ENCODE measurements at regions of chr11 and their contacts with region 1.

Region 1: GRCh38 chr11:65497141-65498041 is 1.5 kb upstream of the MALAT1 start:
- DNase-seq: peak; percentile 99
- ATAC-seq: peak; percentile 77
- H3K4me3 Mint-ChIP-seq: no peak overlapping the region
- H3K27ac Mint-ChIP-seq: no peak overlapping the region
- H3K4me1 Mint-ChIP-seq: peaks cover 33% of the 10 kb centered on the region
- H3K27me3 Mint-ChIP-seq: no peaks in the 10 kb centered on the region
- CTCF ChIP-seq: no peak

Region 2: DNA sequence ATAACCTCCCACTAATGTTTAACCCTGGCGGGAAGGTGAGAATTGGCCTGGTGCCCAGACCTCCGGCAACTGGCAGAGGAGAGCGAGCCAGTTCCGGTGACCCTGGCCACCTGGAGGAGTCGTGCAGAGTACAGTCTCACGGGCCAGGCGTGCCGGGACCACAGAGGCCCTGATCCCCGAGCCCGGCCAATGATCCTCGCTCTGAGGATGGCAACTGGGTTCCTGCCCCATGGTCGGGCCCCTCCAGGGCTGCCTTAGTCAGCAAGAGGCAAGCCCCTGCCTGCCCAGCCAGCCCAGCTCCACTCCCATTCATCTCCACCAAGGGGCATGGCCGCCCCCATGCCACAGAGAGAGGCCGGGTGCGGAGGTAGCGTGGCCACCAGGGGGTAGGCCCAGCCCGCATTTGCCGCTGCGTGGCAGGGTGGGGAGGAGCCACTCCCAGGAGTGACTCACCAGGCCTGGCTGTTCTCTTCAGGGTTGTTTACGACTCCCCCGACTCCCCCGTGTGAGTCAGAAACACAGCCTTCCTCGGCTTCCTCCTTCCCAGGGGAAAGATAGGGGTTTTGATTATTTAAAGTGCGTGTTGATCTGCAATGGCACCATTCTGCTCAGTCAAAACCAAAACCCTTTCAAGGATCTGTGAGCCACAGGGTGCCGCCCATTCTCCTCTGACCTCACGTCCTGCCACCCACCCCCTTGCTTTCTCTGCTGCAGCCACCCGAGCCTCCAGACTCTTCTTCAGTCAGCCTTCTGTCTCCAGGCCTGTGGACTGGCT is 115.2 kb before region 1 on chr11 and contains the start of gene SLC25A45:
- CTCF ChIA-PET with region 1: interaction called, 5 read pairs
- POLR2A ChIA-PET with region 1: interaction called, 333 read pairs
- intact Hi-C with region 1: loop called (anchors 2 kb)
- DNase-seq: peak; percentile 96
- ATAC-seq: peak; percentile 85
- H3K4me3 Mint-ChIP-seq: peak within 1 kb of the TSS; percentile 78
- H3K27ac Mint-ChIP-seq: peak within 1 kb of the TSS; percentile 97
- H3K4me1 Mint-ChIP-seq: peaks cover 44% of the 10 kb centered on the region
- H3K27me3 Mint-ChIP-seq: no peaks in the 10 kb centered on the region
- CTCF ChIP-seq: peak; percentile 91
- total RNA-seq, gene SLC25A45: 12.8 to 14.4 TPM

Region 3: GRCh38 chr11:65440831-65441499 is 56.4 kb before region 1 on chr11:
- CTCF ChIA-PET with region 1: interaction called, 3 read pairs
- POLR2A ChIA-PET with region 1: interaction called, 59 read pairs
- intact Hi-C with region 1: no loop called
- DNase-seq: no peak
- ATAC-seq: peak; percentile 25
- H3K4me3 Mint-ChIP-seq: peak overlapping the region; percentile 15
- H3K27ac Mint-ChIP-seq: peak overlapping the region; percentile 87
- H3K4me1 Mint-ChIP-seq: peaks cover 63% of the 10 kb centered on the region
- H3K27me3 Mint-ChIP-seq: no peaks in the 10 kb centered on the region
- CTCF ChIP-seq: no peak

Region 4: GRCh38 chr11:65471410-65471762 is 26.0 kb before region 1 on chr11:
- CTCF ChIA-PET with region 1: interaction called, 15 read pairs
- POLR2A ChIA-PET with region 1: interaction called, 687 read pairs
- intact Hi-C with region 1: no loop called
- DNase-seq: no peak
- ATAC-seq: no peak
- H3K4me3 Mint-ChIP-seq: peak overlapping the region; percentile 72
- H3K27ac Mint-ChIP-seq: peak overlapping the region; percentile 99
- H3K4me1 Mint-ChIP-seq: peaks cover 26% of the 10 kb centered on the region
- H3K27me3 Mint-ChIP-seq: no peaks in the 10 kb centered on the region
- CTCF ChIP-seq: peak; percentile 37

Region 5: GRCh38 chr11:65524741-65525545 is 27.6 kb after region 1 on chr11 and contains the start of gene SCYL1:
- CTCF ChIA-PET with region 1: no interaction called
- POLR2A ChIA-PET with region 1: interaction called, 42 read pairs
- intact Hi-C with region 1: no loop called
- DNase-seq: peak; percentile 79
- ATAC-seq: peak; percentile 93
- H3K4me3 Mint-ChIP-seq: peak within 1 kb of the TSS; percentile 93
- H3K27ac Mint-ChIP-seq: peak within 1 kb of the TSS; percentile 94
- H3K4me1 Mint-ChIP-seq: peaks cover 61% of the 10 kb centered on the region
- H3K27me3 Mint-ChIP-seq: no peaks in the 10 kb centered on the region
- CTCF ChIP-seq: no peak
- total RNA-seq, gene SCYL1: 71.5 to 76.8 TPM

Region 6: GRCh38 chr11:65569973-65570918 is 72.9 kb after region 1 on chr11 and contains the start of gene ZNRD2:
- CTCF ChIA-PET with region 1: interaction called, 4 read pairs
- POLR2A ChIA-PET with region 1: interaction called, 42 read pairs
- intact Hi-C with region 1: no loop called
- DNase-seq: peak; percentile 99
- ATAC-seq: peak; percentile 77
- H3K4me3 Mint-ChIP-seq: peak within 1 kb of the TSS; percentile 93
- H3K27ac Mint-ChIP-seq: peak within 1 kb of the TSS; percentile 97
- H3K4me1 Mint-ChIP-seq: peaks cover 57% of the 10 kb centered on the region
- H3K27me3 Mint-ChIP-seq: no peaks in the 10 kb centered on the region
- CTCF ChIP-seq: peak; percentile 27
- total RNA-seq, gene ZNRD2: 54.3 to 54.7 TPM

Region 7: DNA sequence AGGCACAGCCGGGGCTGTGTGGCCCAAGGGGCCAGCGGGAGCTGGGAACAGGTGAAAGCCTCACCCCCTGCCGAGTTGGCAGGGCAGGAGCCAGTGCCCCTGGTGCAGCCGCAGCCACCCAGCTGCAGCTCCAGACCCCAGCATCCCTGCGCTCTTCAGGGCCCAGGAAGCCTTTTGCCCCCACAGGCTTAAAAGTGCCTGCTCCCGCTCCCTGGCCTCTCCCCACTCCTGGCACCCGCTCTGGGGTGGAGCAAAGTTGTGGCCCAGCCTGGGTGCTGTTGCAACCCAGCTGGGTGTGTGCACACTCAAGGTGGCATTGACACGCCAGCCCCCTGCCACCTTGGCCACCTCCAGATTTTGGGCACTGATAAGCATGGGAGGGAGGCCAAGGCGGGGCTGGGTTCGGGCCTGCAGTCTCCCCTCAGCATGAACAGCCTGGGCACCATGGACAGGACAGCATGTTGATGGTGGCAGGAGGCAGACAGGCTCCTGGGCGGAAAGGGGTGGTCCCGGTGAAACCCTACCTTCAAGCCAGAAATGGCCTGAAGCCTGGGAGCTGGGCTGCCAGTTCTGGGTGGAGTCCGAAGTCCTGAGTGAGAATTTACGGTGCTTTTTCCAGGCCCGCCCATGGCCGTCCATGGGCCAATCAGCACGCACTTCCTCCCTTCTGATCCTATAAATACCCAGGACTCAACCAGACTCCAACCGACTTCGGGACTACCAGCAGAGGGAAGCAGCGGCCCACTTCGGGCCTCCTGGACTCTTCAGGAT is 246.7 kb after region 1 on chr11:
- CTCF ChIA-PET with region 1: no interaction called
- POLR2A ChIA-PET with region 1: no interaction called
- intact Hi-C with region 1: no loop called
- DNase-seq: peak; percentile 39
- ATAC-seq: peak; percentile 56
- H3K4me3 Mint-ChIP-seq: no peak overlapping the region
- H3K27ac Mint-ChIP-seq: no peak overlapping the region
- H3K4me1 Mint-ChIP-seq: no peaks in the 10 kb centered on the region
- H3K27me3 Mint-ChIP-seq: peaks cover 12% of the 10 kb centered on the region
- CTCF ChIP-seq: no peak